Aorta (tissue), 5 donors: ENCODE measurements at regions of chr1 and their contacts with region 1.

Region 1: DNA sequence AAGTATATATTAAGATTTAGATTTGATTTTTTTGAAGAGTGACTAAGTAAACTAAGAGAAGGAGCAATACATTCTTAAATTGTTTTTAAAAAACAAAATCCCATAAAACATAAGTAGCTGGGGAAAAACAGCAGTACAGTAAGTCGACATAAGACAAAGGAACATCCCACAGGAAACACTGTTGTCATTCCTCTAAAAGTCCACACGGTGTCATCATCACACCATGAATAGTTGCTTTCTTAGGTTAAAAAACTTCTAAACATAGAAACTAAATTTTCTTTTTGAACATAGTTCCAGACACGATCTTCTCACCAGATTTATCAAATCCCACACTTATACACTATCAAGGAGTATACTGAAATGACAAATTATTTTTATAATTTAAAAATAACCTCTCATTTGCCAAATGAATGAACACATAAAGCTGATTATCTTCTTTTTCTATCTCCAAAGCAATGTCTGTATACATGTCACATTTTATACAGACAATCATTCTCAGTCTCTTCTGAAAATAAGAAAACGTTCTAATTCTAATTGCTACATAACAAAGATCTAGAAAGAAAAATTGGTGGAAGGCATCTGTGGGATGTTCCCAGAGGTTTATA is 15.8 kb downstream of the ODF2L start:
- DNase-seq: no peak
- ATAC-seq: peak; percentile 79
- H3K4me3 ChIP-seq: no peak overlapping the region
- H3K27ac ChIP-seq: no peak overlapping the region
- H3K4me1 ChIP-seq: no peaks in the 10 kb centered on the region
- H3K27me3 ChIP-seq: no peaks in the 10 kb centered on the region

Region 2: DNA sequence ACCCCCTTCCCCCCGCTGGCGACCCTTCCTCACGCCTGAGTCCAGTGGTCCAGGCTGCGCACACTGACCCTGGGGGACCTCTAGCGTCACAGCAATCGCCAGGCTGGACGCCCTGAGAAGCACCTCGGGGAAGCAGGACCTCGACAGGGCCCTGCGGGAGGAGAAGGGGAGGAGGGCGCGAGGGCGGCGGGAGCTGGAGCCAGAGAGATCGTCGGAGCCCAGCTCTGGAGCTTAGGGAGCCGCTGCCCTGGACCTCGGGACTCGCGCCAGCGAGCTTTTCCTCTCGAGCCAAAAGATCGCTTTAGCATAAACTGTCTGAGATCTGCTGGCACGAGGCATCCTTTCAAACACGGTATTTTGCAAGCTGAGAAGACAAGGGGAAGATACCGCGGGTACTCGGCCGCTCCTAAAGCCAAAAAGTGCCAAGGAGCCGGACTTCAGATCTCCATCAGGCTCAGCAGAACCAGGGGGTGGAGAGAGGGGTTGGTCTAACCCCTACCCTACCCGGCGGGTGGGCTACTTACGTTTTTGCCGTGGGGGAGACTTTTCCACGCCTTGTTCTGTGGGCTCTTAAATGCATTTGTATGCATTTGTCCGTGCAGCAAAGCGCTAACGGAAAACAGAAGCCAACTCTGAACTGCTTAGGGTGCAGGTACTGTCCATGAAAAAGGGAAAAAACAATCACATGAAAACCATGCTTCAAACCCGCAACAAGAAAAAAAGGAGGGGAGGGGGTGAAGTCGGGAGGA is 224.4 kb before region 1 on chr1:
- intact Hi-C with region 1: no loop called
- DNase-seq: peak; percentile 47 to 77
- ATAC-seq: peak; percentile 51
- H3K4me3 ChIP-seq: peak overlapping the region; percentile 8 to 39
- H3K27ac ChIP-seq: no peak overlapping the region
- H3K4me1 ChIP-seq: no peaks in the 10 kb centered on the region
- H3K27me3 ChIP-seq: no peaks in the 10 kb centered on the region

Region 3: DNA sequence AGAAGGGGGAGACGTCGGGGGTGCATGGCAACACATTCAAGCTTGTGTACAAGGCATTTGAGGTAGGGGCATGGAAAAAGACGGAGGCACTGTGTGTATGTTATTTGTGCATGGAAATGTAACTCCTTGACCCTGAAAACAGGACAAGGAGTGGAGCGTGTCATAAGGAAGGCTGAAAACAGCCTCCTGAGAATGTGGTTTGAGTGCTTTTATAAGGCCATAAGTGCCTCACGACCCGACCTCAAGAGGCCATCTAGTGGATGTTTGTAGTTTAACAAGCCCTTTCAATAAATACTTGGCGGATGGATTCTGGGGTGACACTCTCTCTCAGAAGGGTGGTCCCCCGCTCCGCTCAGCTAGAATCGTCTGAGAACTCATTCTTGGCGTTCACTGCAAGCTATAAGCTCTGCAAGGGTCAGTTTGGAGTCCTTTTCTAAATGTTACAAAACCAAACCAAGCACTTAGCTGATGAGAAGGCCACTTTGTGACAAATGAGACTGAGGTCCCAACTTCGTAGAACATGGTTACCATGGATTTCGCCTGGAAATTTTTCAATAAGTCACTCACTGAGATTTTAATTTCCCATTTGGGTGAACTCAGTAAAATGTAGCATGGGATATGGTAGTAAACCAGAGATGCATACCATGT is 127.7 kb after region 1 on chr1:
- intact Hi-C with region 1: loop called (anchors 5 kb)
- DNase-seq: no peak
- ATAC-seq: no peak
- H3K4me3 ChIP-seq: no peak overlapping the region
- H3K27ac ChIP-seq: no peak overlapping the region
- H3K4me1 ChIP-seq: no peaks in the 10 kb centered on the region
- H3K27me3 ChIP-seq: no peaks in the 10 kb centered on the region

Region 4: GRCh38 chr1:87084244-87084836 is 704.0 kb after region 1 on chr1:
- intact Hi-C with region 1: loop called in 1 of 2 experiments (anchors 10 kb)
- DNase-seq: no peak
- ATAC-seq: peak; percentile 59
- H3K4me3 ChIP-seq: no peak overlapping the region
- H3K27ac ChIP-seq: no peak overlapping the region
- H3K4me1 ChIP-seq: no peaks in the 10 kb centered on the region
- H3K27me3 ChIP-seq: no peaks in the 10 kb centered on the region